CD4-positive, alpha-beta T cell (primary cell): ENCODE measurements at regions of chr6 and their contacts with region 1.

Region 1: GRCh38 chr6:593139-593906 is 63.6 kb downstream of the HUS1B start:
- DNase-seq: peak; percentile 29 to 81 (median 56)
- ATAC-seq: peak; percentile 39
- H3K4me3 ChIP-seq: no peak overlapping the region
- H3K4me3 Mint-ChIP-seq: no peak overlapping the region
- H3K27ac ChIP-seq: no peak overlapping the region
- H3K27ac Mint-ChIP-seq: no peak overlapping the region
- H3K4me1 ChIP-seq: no peaks in the 10 kb centered on the region
- H3K4me1 Mint-ChIP-seq: no peaks in the 10 kb centered on the region
- H3K27me3 ChIP-seq: no peaks in the 10 kb centered on the region
- H3K27me3 Mint-ChIP-seq: no peaks in the 10 kb centered on the region
- CTCF ChIP-seq: peak; percentile 81

Region 2: DNA sequence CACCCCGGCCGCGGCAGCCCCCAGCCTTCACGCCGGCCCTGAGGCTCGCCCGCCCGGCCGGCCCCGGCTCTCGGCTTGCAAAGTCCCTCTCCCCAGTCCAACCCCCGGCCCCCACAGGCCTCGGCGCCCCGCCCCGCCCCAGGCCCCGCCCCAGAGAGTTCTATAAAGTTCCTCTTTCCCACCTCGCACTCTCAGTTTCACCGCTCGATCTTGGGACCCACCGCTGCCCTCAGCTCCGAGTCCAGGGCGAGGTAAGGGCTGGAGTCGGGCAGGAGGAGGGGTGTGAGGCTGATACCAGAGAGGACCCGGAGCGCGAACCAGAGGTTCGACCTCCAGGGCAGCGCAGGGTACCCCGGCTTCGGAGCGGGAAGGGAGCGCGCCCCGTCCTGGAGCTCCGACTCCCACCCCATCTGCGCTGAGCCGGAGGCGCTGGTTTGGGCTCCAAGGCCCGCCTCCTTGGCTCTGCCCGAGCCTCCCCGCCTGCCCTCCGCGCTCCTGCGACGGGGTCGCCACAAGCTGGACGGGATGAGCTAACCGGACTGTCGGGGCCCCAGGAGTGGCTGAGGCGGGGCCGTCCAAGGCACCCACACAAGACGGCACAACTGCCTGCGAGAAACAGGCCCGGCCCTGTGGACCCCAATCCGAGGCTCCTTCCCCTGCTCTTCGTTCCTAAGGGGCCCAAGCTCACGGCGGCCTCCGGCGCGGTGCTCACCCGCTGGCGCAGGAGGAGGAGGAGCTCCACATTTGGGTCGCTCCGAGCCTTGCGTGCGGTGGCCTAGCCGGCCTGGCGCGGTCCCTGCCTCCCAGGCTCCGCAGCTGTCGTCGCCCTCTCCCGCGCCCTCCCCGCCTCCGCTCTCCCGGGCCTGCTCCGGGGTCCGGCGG is 201.5 kb before region 1 on chr6 and contains the start of gene IRF4:
- CTCF ChIA-PET with region 1: interaction called, 6 read pairs
- POLR2A ChIA-PET with region 1: interaction called, 4 read pairs
- intact Hi-C with region 1: loop called in 1 of 2 experiments (anchors 10 kb)
- DNase-seq: peak in 12 of 14 experiments; percentile 33 to 76 (median 44)
- ATAC-seq: peak; percentile 33
- H3K4me3 ChIP-seq: peak within 1 kb of the TSS; percentile 80
- H3K4me3 Mint-ChIP-seq: peak within 1 kb of the TSS; percentile 96
- H3K27ac ChIP-seq: no peak within 1 kb of the TSS
- H3K27ac Mint-ChIP-seq: peak within 1 kb of the TSS; percentile 79
- H3K4me1 ChIP-seq: peaks cover 38% of the 10 kb centered on the region
- H3K4me1 Mint-ChIP-seq: peaks cover 33% of the 10 kb centered on the region
- H3K27me3 ChIP-seq: no peaks in the 10 kb centered on the region
- H3K27me3 Mint-ChIP-seq: peaks cover 9% of the 10 kb centered on the region
- CTCF ChIP-seq: no peak
- total RNA-seq, gene IRF4: 16.9 to 20.8 TPM

Region 3: DNA sequence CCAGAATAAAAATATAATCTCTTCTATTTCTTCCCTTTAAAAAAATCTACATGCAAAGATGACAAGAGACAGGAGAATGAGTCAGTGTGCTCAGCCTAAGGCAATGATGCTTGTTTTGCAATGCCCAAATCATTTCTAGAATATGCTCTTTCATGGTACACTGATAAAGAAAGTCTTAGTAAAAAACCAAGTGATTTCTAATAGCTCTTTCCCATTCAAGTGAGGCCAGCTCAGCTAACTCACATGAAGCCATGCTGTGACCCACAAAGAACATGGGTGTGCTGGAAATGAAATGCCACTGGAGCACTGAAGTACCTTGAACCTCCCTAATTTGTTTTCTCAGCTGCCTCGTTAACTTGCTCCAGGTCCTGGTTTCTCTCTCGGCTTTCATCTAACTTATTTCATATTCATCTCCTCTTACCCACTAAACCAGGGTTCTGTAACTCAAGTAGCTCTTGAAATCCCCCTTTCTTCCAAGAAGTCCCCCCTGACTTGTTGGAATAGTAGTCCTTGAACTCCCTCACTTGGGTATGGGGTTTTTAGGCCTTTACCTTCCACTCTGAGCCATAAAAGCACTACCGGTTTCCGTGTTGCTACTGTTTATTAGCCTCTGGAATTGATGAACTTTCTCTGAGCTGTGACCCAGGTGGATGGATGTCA is 109.1 kb before region 1 on chr6:
- CTCF ChIA-PET with region 1: no interaction called
- POLR2A ChIA-PET with region 1: no interaction called
- intact Hi-C with region 1: no loop called
- DNase-seq: no peak
- ATAC-seq: no peak
- H3K4me3 ChIP-seq: no peak overlapping the region
- H3K4me3 Mint-ChIP-seq: no peak overlapping the region
- H3K27ac ChIP-seq: no peak overlapping the region
- H3K27ac Mint-ChIP-seq: no peak overlapping the region
- H3K4me1 ChIP-seq: peaks cover 3% of the 10 kb centered on the region
- H3K4me1 Mint-ChIP-seq: peaks cover 38% of the 10 kb centered on the region
- H3K27me3 ChIP-seq: no peaks in the 10 kb centered on the region
- H3K27me3 Mint-ChIP-seq: no peaks in the 10 kb centered on the region
- CTCF ChIP-seq: no peak

Region 4: GRCh38 chr6:722077-722524 is 128.8 kb after region 1 on chr6:
- CTCF ChIA-PET with region 1: interaction called, 10 read pairs
- POLR2A ChIA-PET with region 1: no interaction called
- intact Hi-C with region 1: loop called (anchors 5 kb)
- DNase-seq: peak; percentile 50 to 83 (median 64)
- ATAC-seq: peak; percentile 81
- H3K4me3 ChIP-seq: no peak overlapping the region
- H3K4me3 Mint-ChIP-seq: no peak overlapping the region
- H3K27ac ChIP-seq: no peak overlapping the region
- H3K27ac Mint-ChIP-seq: no peak overlapping the region
- H3K4me1 ChIP-seq: peaks cover 2% of the 10 kb centered on the region
- H3K4me1 Mint-ChIP-seq: peaks cover 4% of the 10 kb centered on the region
- H3K27me3 ChIP-seq: no peaks in the 10 kb centered on the region
- H3K27me3 Mint-ChIP-seq: peaks cover 23% of the 10 kb centered on the region
- CTCF ChIP-seq: peak; percentile 98

Region 5: DNA sequence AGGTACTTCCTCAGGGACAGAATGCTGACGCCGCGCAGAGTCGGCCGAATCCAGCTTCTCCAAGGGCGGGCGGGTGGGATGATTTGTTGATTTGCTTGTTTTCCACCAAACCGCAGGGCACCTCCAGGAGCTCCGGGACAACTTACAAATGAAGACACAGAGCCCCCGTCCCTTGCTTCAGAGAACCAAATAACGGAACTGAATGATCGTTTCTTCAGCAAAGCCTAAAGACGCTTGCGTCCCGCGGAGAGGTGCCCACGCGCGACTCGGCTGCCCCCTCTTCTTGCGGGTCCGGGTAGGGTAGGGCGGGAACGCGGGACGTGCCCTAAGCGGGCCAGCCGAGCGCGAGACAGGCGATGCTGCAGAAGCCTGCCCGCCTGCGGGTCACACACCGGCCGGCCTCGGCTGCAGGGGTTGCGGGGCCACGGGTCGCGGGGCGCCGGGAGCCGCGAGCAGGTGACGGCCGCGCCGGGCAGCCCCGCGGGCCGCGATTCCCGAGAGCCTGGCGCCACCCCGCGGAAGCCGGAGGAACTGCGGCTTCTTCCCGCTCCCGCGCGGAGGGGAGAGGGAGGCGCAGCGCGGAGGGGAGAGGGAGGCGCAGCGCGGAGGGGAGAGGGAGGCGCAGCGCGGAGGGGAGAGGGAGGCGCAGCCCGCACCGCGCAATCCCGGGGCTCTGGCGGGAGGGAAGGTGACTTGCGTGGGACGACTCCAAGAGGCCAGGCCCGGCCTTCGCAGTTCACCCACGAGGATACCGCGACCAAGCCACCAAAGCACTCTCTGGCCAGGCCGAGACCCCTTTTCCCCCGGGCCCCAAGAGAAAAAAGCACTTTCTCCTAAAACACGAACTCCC is 788.4 kb after region 1 on chr6:
- CTCF ChIA-PET with region 1: no interaction called
- POLR2A ChIA-PET with region 1: no interaction called
- intact Hi-C with region 1: loop called (anchors 5 kb)
- DNase-seq: peak in 13 of 14 experiments; percentile 19 to 70 (median 48)
- ATAC-seq: peak; percentile 67
- H3K4me3 ChIP-seq: no peak overlapping the region
- H3K4me3 Mint-ChIP-seq: no peak overlapping the region
- H3K27ac ChIP-seq: no peak overlapping the region
- H3K27ac Mint-ChIP-seq: no peak overlapping the region
- H3K4me1 ChIP-seq: peaks cover 37% of the 10 kb centered on the region
- H3K4me1 Mint-ChIP-seq: peaks cover 43% of the 10 kb centered on the region
- H3K27me3 ChIP-seq: peaks cover 75 to 96% of the 10 kb centered on the region in 2 experiments
- H3K27me3 Mint-ChIP-seq: peaks cover 72% of the 10 kb centered on the region
- CTCF ChIP-seq: peak; percentile 47

Region 6: GRCh38 chr6:1436334-1437306 is 843.3 kb after region 1 on chr6:
- CTCF ChIA-PET with region 1: interaction called, 4 read pairs
- POLR2A ChIA-PET with region 1: no interaction called
- intact Hi-C with region 1: loop called (anchors 2 kb)
- DNase-seq: peak in 11 of 14 experiments; percentile 7 to 72 (median 26)
- ATAC-seq: peak; percentile 82
- H3K4me3 ChIP-seq: no peak overlapping the region
- H3K4me3 Mint-ChIP-seq: no peak overlapping the region
- H3K27ac ChIP-seq: no peak overlapping the region
- H3K27ac Mint-ChIP-seq: no peak overlapping the region
- H3K4me1 ChIP-seq: no peaks in the 10 kb centered on the region
- H3K4me1 Mint-ChIP-seq: peaks cover 6% of the 10 kb centered on the region
- H3K27me3 ChIP-seq: peaks cover 9 to 20% of the 10 kb centered on the region in 2 experiments
- H3K27me3 Mint-ChIP-seq: peaks cover 55% of the 10 kb centered on the region
- CTCF ChIP-seq: peak; percentile 79